ENCODE measurements at regions of chr16 and their contacts with region 1.

Region 1: DNA sequence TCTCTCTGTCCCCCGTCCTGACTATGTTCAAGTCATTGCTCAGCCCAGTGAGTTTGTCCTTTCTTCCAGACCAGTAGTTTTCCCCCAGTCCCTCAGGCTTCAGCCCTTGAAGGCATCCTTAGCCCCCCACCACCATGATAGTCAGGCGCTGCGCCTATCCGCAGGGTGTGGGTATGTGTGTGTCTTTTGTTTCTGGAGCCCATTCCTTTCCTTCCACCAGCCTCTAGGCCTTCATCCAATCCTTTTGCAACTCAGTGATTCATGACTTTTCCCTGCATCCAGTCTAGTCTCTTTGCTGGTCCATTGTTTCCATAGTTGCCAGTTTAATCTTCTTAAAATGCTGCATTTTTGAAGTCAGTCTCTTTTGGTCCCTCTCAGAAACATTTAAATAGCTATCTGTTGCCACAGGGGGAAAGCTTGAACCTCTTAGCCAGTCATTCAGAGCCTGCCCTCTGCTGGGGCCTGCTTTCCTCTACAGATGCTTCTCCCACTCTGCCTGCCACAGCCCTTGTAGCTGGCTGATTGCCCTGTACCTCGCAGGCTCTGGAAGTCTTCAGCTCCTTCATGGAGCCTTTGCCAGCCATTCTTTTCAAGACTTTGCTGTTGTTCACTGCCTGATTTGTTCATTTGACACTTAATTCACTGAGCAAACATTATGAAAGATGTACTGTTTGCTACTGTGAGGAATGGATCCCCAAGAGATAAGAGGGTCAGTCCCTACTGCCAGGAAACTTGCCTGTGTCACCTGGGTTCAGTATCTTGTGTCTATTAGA is 55.9 kb upstream of the ADCY7 start:
- DNase-seq: peak; percentile 75
- H3K4me3 ChIP-seq: no peak overlapping the region
- CTCF ChIP-seq: peak; percentile 91

Region 2: GRCh38 chr16:50024684-50025536 is 185.5 kb before region 1 on chr16 and contains the start of gene CNEP1R1:
- CTCF ChIA-PET with region 1: interaction called, 249 read pairs
- POLR2A ChIA-PET with region 1: interaction called, 7 read pairs
- DNase-seq: peak; percentile 77
- H3K4me3 ChIP-seq: peak within 1 kb of the TSS; percentile 86
- CTCF ChIP-seq: peak; percentile 100

Region 3: DNA sequence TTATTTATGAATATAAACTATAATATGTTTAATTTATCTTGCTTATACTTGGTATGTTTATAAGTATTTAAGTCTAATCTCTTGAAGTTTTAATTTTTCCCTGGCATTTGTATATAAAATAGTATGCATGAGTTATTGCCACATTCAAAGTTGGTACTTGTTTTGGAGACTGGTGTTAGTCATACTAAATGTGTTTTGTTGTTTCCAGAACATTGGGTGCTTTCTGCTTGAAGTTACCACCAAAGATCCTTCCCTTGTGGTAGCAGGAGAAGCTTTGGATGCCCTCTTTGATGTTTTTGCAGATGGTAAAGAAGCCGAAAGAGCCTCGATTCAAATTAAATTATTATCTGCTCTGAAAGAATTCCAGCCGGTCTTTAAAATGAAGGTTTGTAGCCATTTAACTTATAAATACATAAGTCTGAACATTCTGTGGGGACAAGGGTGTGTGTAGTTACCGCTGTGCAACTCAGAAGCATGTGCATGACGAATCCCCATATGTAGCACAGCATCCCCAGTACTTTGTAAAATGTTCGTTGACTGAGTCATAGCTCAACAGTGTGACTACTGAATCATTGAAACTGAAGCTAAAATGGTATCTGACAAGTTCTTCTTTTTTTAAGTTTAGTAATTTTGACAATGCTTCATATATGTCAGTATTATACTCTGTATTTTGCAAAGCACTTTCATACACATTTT is 108.3 kb before region 1 on chr16:
- CTCF ChIA-PET with region 1: interaction called, 94 read pairs
- POLR2A ChIA-PET with region 1: no interaction called
- DNase-seq: peak; percentile 68
- H3K4me3 ChIP-seq: no peak overlapping the region
- CTCF ChIP-seq: no peak

Region 4: DNA sequence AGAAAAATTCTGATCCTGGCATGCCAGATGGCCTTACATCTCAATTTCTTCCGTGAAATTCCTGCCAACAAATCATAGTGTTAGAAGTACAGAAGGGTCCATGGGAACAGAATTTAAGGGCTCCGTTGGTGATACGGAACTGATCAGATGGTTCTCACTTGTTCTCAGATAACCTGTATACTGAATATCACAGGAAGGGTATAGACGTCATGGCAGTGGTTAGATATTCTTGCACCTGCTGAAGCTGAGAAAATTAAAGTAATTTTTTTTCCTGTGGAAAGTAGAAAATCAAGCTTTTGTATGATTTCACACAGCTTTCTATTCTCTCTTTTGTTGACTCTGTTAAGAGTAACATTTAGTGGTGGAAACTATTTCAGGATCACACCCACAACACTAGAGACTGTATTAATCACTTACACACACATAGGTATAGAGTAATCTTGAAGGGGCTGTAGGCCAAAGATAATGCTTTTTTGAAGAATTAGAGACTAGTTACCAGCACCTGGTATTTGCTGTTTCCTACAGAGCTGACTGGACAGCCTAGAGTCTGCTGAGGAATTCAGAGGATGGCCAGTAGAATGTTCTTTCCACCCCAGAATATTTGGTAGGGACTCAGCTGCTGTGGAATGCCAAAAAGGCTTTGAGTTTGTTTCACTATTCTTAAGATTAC is 49.8 kb before region 1 on chr16:
- CTCF ChIA-PET with region 1: interaction called, 16 read pairs
- POLR2A ChIA-PET with region 1: no interaction called
- DNase-seq: no peak
- H3K4me3 ChIP-seq: no peak overlapping the region
- CTCF ChIP-seq: no peak

Region 5: GRCh38 chr16:50195276-50195675 is 15.2 kb before region 1 on chr16:
- CTCF ChIA-PET with region 1: interaction called, 56 read pairs
- POLR2A ChIA-PET with region 1: interaction called, 7 read pairs
- DNase-seq: no peak
- H3K4me3 ChIP-seq: peak overlapping the region; percentile 23; the same call in 1 of the 2 replicates
- CTCF ChIP-seq: no peak

Region 6: GRCh38 chr16:50235581-50235980 is 25.1 kb after region 1 on chr16:
- CTCF ChIA-PET with region 1: interaction called, 10 read pairs
- POLR2A ChIA-PET with region 1: no interaction called
- DNase-seq: no peak
- H3K4me3 ChIP-seq: no peak overlapping the region
- CTCF ChIP-seq: no peak

Region 7: GRCh38 chr16:50665128-50665878 is 454.9 kb after region 1 on chr16:
- CTCF ChIA-PET with region 1: interaction called, 16 read pairs
- POLR2A ChIA-PET with region 1: no interaction called
- DNase-seq: no peak
- H3K4me3 ChIP-seq: peak overlapping the region; percentile 58
- CTCF ChIP-seq: peak; percentile 69

Measured in AG04449 (cell line).